Calu3 (cell line): ENCODE measurements at regions of chr22 and their contacts with region 1.

Region 1: DNA sequence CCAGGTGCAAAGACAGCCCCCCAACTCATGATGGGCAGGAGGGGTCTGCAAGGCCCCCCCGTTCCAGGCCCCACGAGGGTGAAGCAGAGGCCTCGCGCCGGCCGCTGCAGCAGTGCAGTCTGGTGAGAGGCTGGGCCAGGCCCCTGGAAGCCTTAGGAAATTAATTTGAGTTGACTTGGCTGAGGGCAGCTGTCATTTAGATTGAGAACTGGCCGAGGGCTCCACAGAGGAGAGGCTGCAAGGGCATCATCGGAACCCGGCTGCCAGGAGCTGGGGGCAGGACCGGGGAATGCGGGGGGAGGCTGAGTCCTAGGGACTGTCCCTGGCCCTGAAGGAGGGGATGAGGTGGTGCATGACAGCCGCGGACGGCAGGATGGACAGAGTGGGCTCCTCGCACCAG is 39.9 kb downstream of the MN1 start:
- DNase-seq: no peak
- H3K4me3 Mint-ChIP-seq: no peak overlapping the region
- H3K27ac Mint-ChIP-seq: no peak overlapping the region
- H3K4me1 Mint-ChIP-seq: no peaks in the 10 kb centered on the region
- H3K27me3 Mint-ChIP-seq: peaks cover 18% of the 10 kb centered on the region
- CTCF ChIP-seq: no peak

Region 2: DNA sequence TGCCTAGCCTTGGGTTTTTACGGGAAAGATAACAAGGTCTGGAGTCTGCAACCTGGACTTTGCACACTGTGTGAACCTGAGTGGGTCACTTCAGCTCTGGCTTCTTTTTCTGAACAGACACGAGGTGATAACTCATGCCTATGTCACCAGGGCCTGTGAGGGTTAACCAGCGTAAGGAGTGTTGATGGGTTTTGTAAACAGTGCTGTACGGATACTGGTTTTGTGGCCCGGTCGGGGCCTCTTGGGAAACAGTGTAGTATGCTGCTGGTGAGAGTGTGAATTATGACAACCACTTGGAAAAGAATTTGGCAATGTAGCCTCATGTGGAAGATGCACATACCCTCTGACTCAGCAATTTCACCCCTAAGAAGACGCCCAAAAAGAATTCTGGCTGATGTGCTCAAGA is 226.9 kb before region 1 on chr22:
- CTCF ChIA-PET with region 1: interaction called, 12 read pairs
- intact Hi-C with region 1: no loop called
- DNase-seq: no peak
- H3K4me3 Mint-ChIP-seq: no peak overlapping the region
- H3K27ac Mint-ChIP-seq: no peak overlapping the region
- H3K4me1 Mint-ChIP-seq: no peaks in the 10 kb centered on the region
- H3K27me3 Mint-ChIP-seq: peaks cover 14% of the 10 kb centered on the region
- CTCF ChIP-seq: no peak

Region 3: DNA sequence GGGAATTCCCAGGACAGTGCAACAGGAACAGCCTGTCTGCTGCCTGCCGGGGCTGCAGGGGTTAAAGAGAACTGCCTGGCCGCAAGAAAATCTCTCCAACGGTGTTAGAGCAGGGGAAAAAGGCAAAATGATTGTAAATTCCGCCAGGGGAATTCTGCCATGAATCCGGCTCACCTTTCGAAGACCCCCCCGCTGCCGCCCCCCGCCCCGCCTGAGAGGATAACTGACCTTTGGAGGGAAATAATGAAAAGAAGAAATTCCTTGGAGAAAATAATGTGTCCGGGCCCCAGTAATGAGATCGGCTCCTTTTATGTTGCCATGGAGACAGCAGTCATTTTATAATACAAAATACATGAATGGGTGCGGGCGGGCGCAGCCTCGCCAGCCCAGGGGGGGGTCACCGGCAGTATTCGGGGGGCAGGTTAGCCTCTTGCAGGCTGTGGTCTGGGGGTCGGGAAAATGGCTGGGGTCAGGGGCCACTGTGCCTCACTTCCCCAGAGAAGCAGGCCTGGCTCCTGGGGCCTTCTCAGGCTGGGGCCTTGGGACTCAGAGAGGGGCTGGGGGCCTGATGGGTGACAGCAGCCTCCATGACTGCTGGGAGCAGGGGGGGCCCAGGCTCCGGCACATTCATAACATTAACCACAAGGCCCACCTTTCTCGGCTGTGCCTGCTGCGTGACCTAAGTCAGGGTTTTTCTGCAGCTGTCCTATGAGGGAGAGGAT is 188.2 kb before region 1 on chr22:
- CTCF ChIA-PET with region 1: no interaction called
- intact Hi-C with region 1: no loop called
- DNase-seq: no peak
- H3K4me3 Mint-ChIP-seq: no peak overlapping the region
- H3K27ac Mint-ChIP-seq: no peak overlapping the region
- H3K4me1 Mint-ChIP-seq: no peaks in the 10 kb centered on the region
- H3K27me3 Mint-ChIP-seq: peaks cover 78% of the 10 kb centered on the region
- CTCF ChIP-seq: no peak

Region 4: GRCh38 chr22:27825174-27825573 is 63.5 kb after region 1 on chr22:
- CTCF ChIA-PET with region 1: no interaction called
- intact Hi-C with region 1: no loop called
- DNase-seq: no peak
- H3K4me3 Mint-ChIP-seq: no peak overlapping the region
- H3K27ac Mint-ChIP-seq: no peak overlapping the region
- H3K4me1 Mint-ChIP-seq: peaks cover 14% of the 10 kb centered on the region
- H3K27me3 Mint-ChIP-seq: no peaks in the 10 kb centered on the region
- CTCF ChIP-seq: no peak

Region 5: GRCh38 chr22:27842669-27843431 is 81.2 kb after region 1 on chr22:
- CTCF ChIA-PET with region 1: no interaction called
- intact Hi-C with region 1: no loop called
- DNase-seq: no peak
- H3K4me3 Mint-ChIP-seq: no peak overlapping the region
- H3K27ac Mint-ChIP-seq: peak overlapping the region; percentile 58
- H3K4me1 Mint-ChIP-seq: no peaks in the 10 kb centered on the region
- H3K27me3 Mint-ChIP-seq: no peaks in the 10 kb centered on the region
- CTCF ChIP-seq: no peak

Region 6: DNA sequence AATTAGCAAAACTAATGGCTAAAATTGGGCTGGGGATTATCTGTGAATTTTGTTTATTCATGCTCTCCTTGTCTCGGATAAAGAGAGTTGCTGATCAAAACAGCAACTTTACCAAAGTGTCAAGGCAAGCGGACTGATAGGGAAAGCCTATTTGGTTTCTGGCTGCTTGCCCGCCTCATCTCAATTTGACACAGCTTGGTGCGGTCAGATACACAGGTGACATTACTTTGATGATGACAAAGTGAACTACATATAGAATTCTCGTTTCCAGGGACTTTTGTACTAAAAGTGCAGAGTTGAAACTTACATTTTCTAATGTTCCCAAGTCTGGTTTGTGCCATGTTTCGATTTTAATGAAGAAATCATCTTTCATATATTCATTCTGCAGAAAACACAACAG is 134.6 kb after region 1 on chr22:
- CTCF ChIA-PET with region 1: no interaction called
- intact Hi-C with region 1: no loop called
- DNase-seq: no peak
- H3K4me3 Mint-ChIP-seq: no peak overlapping the region
- H3K27ac Mint-ChIP-seq: no peak overlapping the region
- H3K4me1 Mint-ChIP-seq: no peaks in the 10 kb centered on the region
- H3K27me3 Mint-ChIP-seq: no peaks in the 10 kb centered on the region
- CTCF ChIP-seq: no peak